H1 (cell line): ENCODE measurements at regions of chr20 and their contacts with region 1.

Region 1: DNA sequence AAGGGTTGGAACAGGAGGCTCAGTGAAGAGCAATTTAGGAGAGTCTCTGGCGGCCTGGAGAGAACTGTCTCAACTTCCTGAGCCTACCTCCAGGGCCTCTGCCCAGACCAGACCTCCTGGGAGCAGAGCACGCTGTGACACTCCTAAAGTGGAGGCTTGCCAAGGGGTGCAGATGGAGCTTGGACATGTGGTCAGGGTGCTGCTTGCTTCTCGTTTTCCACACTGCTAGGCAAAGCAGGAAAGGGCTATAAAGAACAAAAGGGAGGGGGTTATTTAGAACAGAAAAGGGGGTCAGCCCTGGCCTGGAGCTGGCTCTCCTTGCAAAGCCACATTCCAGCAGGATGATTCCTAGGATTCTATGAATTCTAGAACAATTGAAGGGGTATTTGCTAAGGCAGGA is 145.7 kb upstream of the GGTLC1 start:
- DNase-seq: no peak
- H3K4me3 ChIP-seq: no peak overlapping the region
- H3K27ac ChIP-seq: no peak overlapping the region
- H3K4me1 ChIP-seq: peaks cover 0 to 2% (median 0%) of the 10 kb centered on the region in 4 experiments; a peak in 2 of 7 replicates
- H3K27me3 ChIP-seq: no peaks in the 10 kb centered on the region
- CTCF ChIP-seq: no peak
- EP300 ChIP-seq: no peak
- POLR2A ChIP-seq: no peak
- RAD21 ChIP-seq: no peak

Region 2: GRCh38 chr20:24149881-24150307 is 15.6 kb after region 1 on chr20:
- CTCF ChIA-PET with region 1: interaction called, 15 read pairs
- POLR2A ChIA-PET with region 1: no interaction called
- DNase-seq: peak in 1 of 2 experiments; percentile 82
- H3K4me3 ChIP-seq: no peak overlapping the region
- H3K27ac ChIP-seq: no peak overlapping the region
- H3K4me1 ChIP-seq: no peaks in the 10 kb centered on the region
- H3K27me3 ChIP-seq: no peaks in the 10 kb centered on the region
- CTCF ChIP-seq: peak; percentile 56 to 77 (median 73)
- EP300 ChIP-seq: no peak
- POLR2A ChIP-seq: no peak
- RAD21 ChIP-seq: peak; percentile 47 to 57